ENCODE measurements at regions of chr13 and their contacts with region 1.

Region 1: GRCh38 chr13:40666045-40666904 is at the start of gene FOXO1:
- DNase-seq: peak; percentile 81 to 95 (median 90)
- ATAC-seq: peak; percentile 76
- H3K4me3 ChIP-seq: peak within 1 kb of the TSS; percentile 98
- H3K4me3 Mint-ChIP-seq: peak within 1 kb of the TSS; percentile 96
- H3K27ac ChIP-seq: peak within 1 kb of the TSS; percentile 56 to 91
- H3K27ac Mint-ChIP-seq: peak within 1 kb of the TSS; percentile 95
- H3K4me1 ChIP-seq: peaks cover 23% of the 10 kb centered on the region
- H3K4me1 Mint-ChIP-seq: peaks cover 37% of the 10 kb centered on the region
- H3K27me3 ChIP-seq: no peaks in the 10 kb centered on the region
- H3K27me3 Mint-ChIP-seq: no peaks in the 10 kb centered on the region
- CTCF ChIP-seq: no peak
- total RNA-seq, gene FOXO1: 93.1 to 101 TPM

Region 2: GRCh38 chr13:40069173-40070044 is 596.9 kb before region 1 on chr13:
- CTCF ChIA-PET with region 1: interaction called, 10 read pairs
- POLR2A ChIA-PET with region 1: interaction called, 9 read pairs
- intact Hi-C with region 1: loop called in 1 of 2 experiments (anchors 5 kb)
- DNase-seq: peak; percentile 54 to 86 (median 67)
- ATAC-seq: peak; percentile 92
- H3K4me3 ChIP-seq: no peak overlapping the region
- H3K4me3 Mint-ChIP-seq: peak overlapping the region; percentile 46
- H3K27ac ChIP-seq: no peak overlapping the region
- H3K27ac Mint-ChIP-seq: peak overlapping the region; percentile 8
- H3K4me1 ChIP-seq: peaks cover 15% of the 10 kb centered on the region
- H3K4me1 Mint-ChIP-seq: peaks cover 38% of the 10 kb centered on the region
- H3K27me3 ChIP-seq: no peaks in the 10 kb centered on the region
- H3K27me3 Mint-ChIP-seq: no peaks in the 10 kb centered on the region
- CTCF ChIP-seq: peak; percentile 91

Region 3: GRCh38 chr13:40211589-40211974 is 454.7 kb before region 1 on chr13:
- CTCF ChIA-PET with region 1: no interaction called
- POLR2A ChIA-PET with region 1: interaction called, 28 read pairs
- intact Hi-C with region 1: loop called in 1 of 2 experiments (anchors 10 kb)
- DNase-seq: no peak
- ATAC-seq: no peak
- H3K4me3 ChIP-seq: no peak overlapping the region
- H3K4me3 Mint-ChIP-seq: no peak overlapping the region
- H3K27ac ChIP-seq: no peak overlapping the region
- H3K27ac Mint-ChIP-seq: peak overlapping the region; percentile 16
- H3K4me1 ChIP-seq: peaks cover 31% of the 10 kb centered on the region
- H3K4me1 Mint-ChIP-seq: peaks cover 71% of the 10 kb centered on the region
- H3K27me3 ChIP-seq: no peaks in the 10 kb centered on the region
- H3K27me3 Mint-ChIP-seq: no peaks in the 10 kb centered on the region
- CTCF ChIP-seq: no peak

Region 4: GRCh38 chr13:40485611-40486517 is 180.4 kb before region 1 on chr13:
- CTCF ChIA-PET with region 1: interaction called, 4 read pairs
- POLR2A ChIA-PET with region 1: interaction called, 30 read pairs
- intact Hi-C with region 1: loop called (anchors 2 to 5 kb)
- DNase-seq: peak; percentile 52 to 94 (median 70)
- ATAC-seq: peak; percentile 93
- H3K4me3 ChIP-seq: peak overlapping the region; percentile 25
- H3K4me3 Mint-ChIP-seq: peak overlapping the region; percentile 78
- H3K27ac ChIP-seq: peak overlapping the region; percentile 70 to 77
- H3K27ac Mint-ChIP-seq: peak overlapping the region; percentile 94
- H3K4me1 ChIP-seq: peaks cover 95% of the 10 kb centered on the region
- H3K4me1 Mint-ChIP-seq: peaks cover 90% of the 10 kb centered on the region
- H3K27me3 ChIP-seq: no peaks in the 10 kb centered on the region
- H3K27me3 Mint-ChIP-seq: no peaks in the 10 kb centered on the region
- CTCF ChIP-seq: no peak

Region 5: GRCh38 chr13:40598569-40598968 is 67.7 kb before region 1 on chr13:
- CTCF ChIA-PET with region 1: no interaction called
- POLR2A ChIA-PET with region 1: interaction called, 14 read pairs
- intact Hi-C with region 1: no loop called
- DNase-seq: no peak
- ATAC-seq: no peak
- H3K4me3 ChIP-seq: no peak overlapping the region
- H3K4me3 Mint-ChIP-seq: peak overlapping the region; percentile 61
- H3K27ac ChIP-seq: no peak overlapping the region
- H3K27ac Mint-ChIP-seq: peak overlapping the region; percentile 72
- H3K4me1 ChIP-seq: peaks cover 58% of the 10 kb centered on the region
- H3K4me1 Mint-ChIP-seq: peaks cover 94% of the 10 kb centered on the region
- H3K27me3 ChIP-seq: no peaks in the 10 kb centered on the region
- H3K27me3 Mint-ChIP-seq: no peaks in the 10 kb centered on the region
- CTCF ChIP-seq: no peak

Region 6: GRCh38 chr13:40653527-40654318 is 12.6 kb before region 1 on chr13:
- CTCF ChIA-PET with region 1: interaction called, 3 read pairs
- POLR2A ChIA-PET with region 1: interaction called, 22 read pairs
- intact Hi-C with region 1: loop called in 1 of 2 experiments (anchors 2 kb)
- DNase-seq: peak in 3 of 14 experiments; percentile 48 to 58 (median 50)
- ATAC-seq: peak; percentile 51
- H3K4me3 ChIP-seq: peak overlapping the region; percentile 24
- H3K4me3 Mint-ChIP-seq: peak overlapping the region; percentile 78
- H3K27ac ChIP-seq: peak overlapping the region; percentile 3 to 39
- H3K27ac Mint-ChIP-seq: peak overlapping the region; percentile 81
- H3K4me1 ChIP-seq: peaks cover 74% of the 10 kb centered on the region
- H3K4me1 Mint-ChIP-seq: peaks cover 100% of the 10 kb centered on the region
- H3K27me3 ChIP-seq: no peaks in the 10 kb centered on the region
- H3K27me3 Mint-ChIP-seq: no peaks in the 10 kb centered on the region
- CTCF ChIP-seq: peak; percentile 24

Measured in CD4-positive, alpha-beta T cell (primary cell).